Endothelial cell of umbilical vein (primary cell): ENCODE measurements at regions of chr4 and their contacts with region 1.

Region 1: DNA sequence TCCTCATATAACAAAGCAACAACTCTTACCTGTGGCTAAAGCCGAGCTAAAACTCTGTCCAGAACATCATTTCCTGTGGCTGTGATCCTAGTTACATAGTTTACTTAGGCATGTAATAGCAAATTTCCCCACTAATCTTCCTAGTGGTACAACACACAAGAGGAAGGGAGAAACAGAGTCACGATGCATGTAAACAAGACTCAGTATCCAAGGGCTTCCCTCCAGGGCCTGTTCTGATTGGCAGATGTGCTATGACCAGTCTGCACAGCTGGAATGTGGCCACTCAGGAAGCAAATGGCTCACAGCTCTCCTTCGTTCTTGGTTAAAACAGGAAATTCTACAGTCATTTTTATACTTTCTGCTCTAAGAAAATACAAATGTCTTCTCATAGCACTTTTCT is 49.2 kb upstream of the PRSS48 start:
- DNase-seq: peak; percentile 99
- H3K4me3 ChIP-seq: peak overlapping the region; percentile 2 to 79 (median 38)
- H3K27ac ChIP-seq: peak overlapping the region; percentile 80
- H3K4me1 ChIP-seq: peaks cover 33% of the 10 kb centered on the region
- H3K27me3 ChIP-seq: no peaks in the 10 kb centered on the region
- CTCF ChIP-seq: no peak
- POLR2A ChIP-seq: peak; percentile 71

Region 2: GRCh38 chr4:151129801-151130200 is 97.9 kb before region 1 on chr4:
- CTCF ChIA-PET with region 1: no interaction called
- POLR2A ChIA-PET with region 1: no interaction called
- dilution Hi-C with region 1: no loop called
- intact Hi-C with region 1: loop called (anchors 2 kb)
- DNase-seq: peak; percentile 78
- H3K4me3 ChIP-seq: no peak overlapping the region
- H3K27ac ChIP-seq: peak overlapping the region; percentile 73
- H3K4me1 ChIP-seq: peaks cover 19% of the 10 kb centered on the region
- H3K27me3 ChIP-seq: no peaks in the 10 kb centered on the region
- CTCF ChIP-seq: no peak
- POLR2A ChIP-seq: peak; percentile 35

Region 3: GRCh38 chr4:151195801-151196200 is 31.9 kb before region 1 on chr4:
- CTCF ChIA-PET with region 1: interaction called, 3 read pairs
- POLR2A ChIA-PET with region 1: no interaction called
- dilution Hi-C with region 1: no loop called
- intact Hi-C with region 1: loop called (anchors 1 kb)
- DNase-seq: peak; percentile 89
- H3K4me3 ChIP-seq: no peak overlapping the region
- H3K27ac ChIP-seq: peak overlapping the region; percentile 93
- H3K4me1 ChIP-seq: peaks cover 22% of the 10 kb centered on the region
- H3K27me3 ChIP-seq: no peaks in the 10 kb centered on the region
- CTCF ChIP-seq: no peak
- POLR2A ChIP-seq: no peak

Region 4: GRCh38 chr4:151284534-151285245 is 57.0 kb after region 1 on chr4:
- CTCF ChIA-PET with region 1: no interaction called
- POLR2A ChIA-PET with region 1: no interaction called
- dilution Hi-C with region 1: no loop called
- intact Hi-C with region 1: loop called (anchors 1 kb)
- DNase-seq: peak; percentile 87
- H3K4me3 ChIP-seq: peak overlapping the region in 1 of 3 experiments; percentile 37
- H3K27ac ChIP-seq: peak overlapping the region; percentile 70
- H3K4me1 ChIP-seq: peaks cover 42% of the 10 kb centered on the region
- H3K27me3 ChIP-seq: no peaks in the 10 kb centered on the region
- CTCF ChIP-seq: no peak
- POLR2A ChIP-seq: no peak

Region 5: DNA sequence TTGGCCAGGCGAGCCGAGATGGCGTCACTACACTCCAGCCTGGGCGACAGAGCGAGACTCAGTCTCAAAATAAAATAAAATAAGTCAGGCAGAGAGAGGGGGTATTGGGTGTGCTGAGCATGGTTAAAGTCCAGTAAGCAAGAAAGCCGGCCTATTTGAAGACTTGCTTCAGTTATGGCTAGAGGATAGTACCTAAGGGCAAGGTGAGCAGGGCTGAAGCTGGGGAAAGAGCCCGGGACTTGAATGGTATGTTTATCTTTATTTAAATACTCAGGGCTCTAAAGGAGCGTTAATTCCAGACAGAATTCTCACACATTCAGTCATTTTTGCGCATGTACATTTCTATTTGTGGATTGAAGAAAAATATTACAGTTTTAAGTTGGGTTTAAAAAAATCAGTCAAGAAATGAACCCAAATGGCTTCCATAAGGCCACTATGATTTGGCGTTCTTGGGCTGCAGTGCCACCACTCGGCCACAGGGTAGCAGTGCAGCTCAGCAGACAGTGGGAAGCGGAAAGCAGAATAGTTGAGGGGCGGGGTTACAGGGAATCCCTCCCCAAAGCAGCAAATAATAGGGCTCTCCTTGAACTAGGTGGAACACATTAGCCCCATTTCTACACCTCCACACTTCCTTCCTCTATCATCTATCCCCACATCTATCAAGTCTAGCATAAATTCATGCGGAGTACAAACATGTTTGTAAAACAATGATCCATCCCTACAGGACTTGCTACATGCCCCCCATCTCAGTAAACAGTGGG is 134.9 kb after region 1 on chr4:
- CTCF ChIA-PET with region 1: interaction called, 7 read pairs
- POLR2A ChIA-PET with region 1: no interaction called
- dilution Hi-C with region 1: no loop called
- intact Hi-C with region 1: loop called (anchors 5 kb)
- DNase-seq: peak; percentile 87
- H3K4me3 ChIP-seq: no peak overlapping the region
- H3K27ac ChIP-seq: no peak overlapping the region
- H3K4me1 ChIP-seq: no peaks in the 10 kb centered on the region
- H3K27me3 ChIP-seq: no peaks in the 10 kb centered on the region
- CTCF ChIP-seq: peak; percentile 96 to 100
- POLR2A ChIP-seq: no peak

Region 6: DNA sequence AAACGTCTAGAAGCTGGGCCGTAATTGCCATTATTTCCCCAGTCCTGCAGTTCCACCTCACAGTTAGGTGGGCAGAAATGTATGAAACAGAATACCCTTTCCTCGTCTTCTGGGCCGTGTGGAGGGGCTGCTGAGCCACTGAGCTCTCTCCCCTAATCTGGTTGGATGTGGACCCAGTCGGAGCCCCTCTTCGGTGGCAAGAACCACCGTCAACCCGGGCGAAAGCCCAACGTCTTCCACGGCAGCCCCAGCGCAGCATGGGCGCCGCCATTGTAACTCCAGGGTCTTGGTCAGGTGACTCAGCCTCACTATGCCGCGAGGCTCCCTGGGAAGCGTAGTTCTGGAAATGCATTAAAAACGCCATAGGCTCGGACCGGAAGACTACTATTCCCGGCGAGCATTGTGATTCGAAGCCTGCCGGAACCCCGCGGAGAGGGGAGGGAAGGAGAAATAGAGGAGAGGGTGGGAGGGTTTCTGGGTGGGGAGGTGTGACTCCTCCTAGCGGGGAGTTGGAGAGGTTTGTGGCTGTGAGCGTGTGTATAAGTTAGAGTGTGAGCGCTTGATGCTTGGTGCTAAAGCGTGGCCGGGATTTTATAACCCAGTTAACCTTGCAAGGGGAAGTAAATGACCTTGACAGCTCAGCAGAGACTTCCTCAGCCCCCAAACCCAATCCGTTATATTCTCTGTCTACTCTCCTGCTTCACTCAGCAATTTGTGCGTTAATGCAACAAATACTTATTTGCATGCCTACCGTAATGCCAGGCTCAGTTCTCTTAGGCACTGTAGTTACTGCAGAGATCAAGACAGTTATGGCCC is 533.2 kb after region 1 on chr4 and contains the start of gene GATB:
- CTCF ChIA-PET with region 1: no interaction called
- POLR2A ChIA-PET with region 1: no interaction called
- dilution Hi-C with region 1: no loop called
- intact Hi-C with region 1: loop called (anchors 2 kb)
- DNase-seq: peak; percentile 98
- H3K4me3 ChIP-seq: peak within 1 kb of the TSS; percentile 59 to 95 (median 78)
- H3K27ac ChIP-seq: peak within 1 kb of the TSS; percentile 63
- H3K4me1 ChIP-seq: peaks cover 10% of the 10 kb centered on the region
- H3K27me3 ChIP-seq: peaks cover 0 to 3% of the 10 kb centered on the region in 2 experiments
- CTCF ChIP-seq: peak in 1 of 2 donors; percentile 72
- POLR2A ChIP-seq: peak; percentile 79
- total RNA-seq, gene GATB: 17.7 and 20.7 TPM in 2 replicates